ENCODE measurements at regions of chr10 and their contacts with region 1.

Region 1: DNA sequence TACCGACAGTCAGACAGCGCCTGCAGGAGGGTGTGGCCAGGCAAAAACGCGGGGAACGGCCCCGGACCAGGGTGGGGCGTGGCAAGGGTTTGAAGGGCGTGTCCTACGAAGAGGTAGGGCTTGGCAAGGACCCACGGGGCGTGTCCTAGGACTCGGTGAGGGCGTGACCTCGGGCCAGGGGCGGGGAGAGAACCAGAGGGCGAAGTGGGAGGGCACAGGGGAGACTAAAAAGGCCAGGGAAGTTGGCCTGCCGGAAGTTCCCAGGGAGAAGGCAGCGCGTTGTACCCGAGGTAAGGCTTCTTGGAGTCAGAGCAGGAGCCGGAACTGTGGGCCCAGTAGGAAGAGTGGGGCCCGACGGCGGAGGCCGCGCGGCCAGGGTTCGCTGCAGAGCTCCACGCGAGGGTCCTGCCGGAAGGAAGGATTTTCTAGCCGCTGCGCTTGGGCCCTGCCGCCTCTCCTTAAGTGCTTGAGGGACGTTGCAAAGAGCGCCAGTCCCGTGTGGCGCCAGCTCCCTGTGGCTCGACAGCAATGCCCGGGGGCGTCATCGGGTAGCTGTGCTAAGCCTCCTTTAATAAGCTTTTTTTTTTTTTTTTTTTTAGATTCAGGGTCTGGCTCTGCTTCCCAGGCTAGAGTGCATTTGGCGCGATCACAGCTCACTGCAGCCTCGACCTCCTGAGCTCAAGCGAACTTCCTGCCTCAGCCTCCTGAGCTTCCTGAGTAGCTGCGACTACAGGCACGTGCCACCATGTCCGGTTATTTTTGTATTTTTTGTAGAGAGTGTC is at the start of gene PTER:
- DNase-seq: peak; percentile 96 to 99 (median 98)
- ATAC-seq: peak; percentile 100
- H3K4me3 ChIP-seq: peak within 1 kb of the TSS; percentile 39 to 82 (median 68)
- H3K27ac ChIP-seq: peak within 1 kb of the TSS; percentile 37 to 93 (median 86)
- H3K4me1 ChIP-seq: peaks cover 0 to 51% (median 19%) of the 10 kb centered on the region in 12 donors
- H3K27me3 ChIP-seq: no peaks in the 10 kb centered on the region
- CTCF ChIP-seq: no peak
- POLR2A ChIP-seq: peak; percentile 50 to 89
- total RNA-seq, gene PTER: 7.4 to 19.3 (median 13.0) TPM

Region 2: DNA sequence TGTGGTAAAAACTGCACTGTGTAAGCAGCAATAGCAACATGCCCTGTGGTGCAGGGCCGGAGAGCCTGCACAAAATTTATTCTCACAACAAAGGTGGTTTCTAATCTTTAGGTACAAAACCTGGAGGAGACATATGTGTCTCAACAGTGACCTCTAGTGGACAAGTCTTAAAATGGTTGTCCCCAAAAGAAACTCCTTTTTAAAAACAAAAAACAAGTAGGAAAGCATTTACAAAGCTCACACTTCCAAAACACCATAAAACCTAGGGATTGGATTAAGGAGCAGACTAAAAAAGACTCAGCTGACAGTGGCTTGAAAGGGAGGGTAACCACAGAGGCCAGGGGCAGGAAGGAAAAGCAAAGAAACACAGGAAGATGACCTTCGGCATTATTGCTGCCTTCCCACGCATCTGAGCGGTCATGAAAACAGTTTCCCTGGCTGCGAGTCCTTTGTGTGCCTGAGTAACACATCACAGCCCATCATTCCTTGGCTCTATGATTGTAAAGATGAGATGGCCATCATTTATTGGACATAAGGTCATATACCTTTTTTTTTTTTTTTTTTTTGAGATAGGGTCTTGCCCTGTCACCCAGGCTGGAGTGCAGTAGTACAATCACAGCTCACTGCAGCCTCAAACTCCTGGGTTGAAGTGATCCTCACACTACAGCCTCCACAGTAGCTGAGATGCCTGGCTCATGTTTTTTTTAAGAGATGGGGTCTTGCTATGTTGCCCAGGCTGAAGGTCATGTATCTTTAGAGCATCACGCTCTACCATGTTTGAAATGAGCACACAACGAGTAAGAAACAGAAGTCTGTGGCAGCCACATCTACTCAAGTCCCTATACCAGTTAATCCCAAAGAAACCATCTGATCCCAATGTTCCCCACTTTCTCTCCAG is 340.8 kb after region 1 on chr10:
- intact Hi-C with region 1: loop called in 1 of 10 experiments (anchors 10 kb)
- DNase-seq: peak in 3 of 5 donors; percentile 46 to 61 (median 53)
- ATAC-seq: peak; percentile 69 to 96 (median 79)
- H3K4me3 ChIP-seq: peak overlapping the region in 1 of 12 donors; percentile 12
- H3K27ac ChIP-seq: peak overlapping the region in 10 of 12 donors; percentile 5 to 57 (median 34)
- H3K4me1 ChIP-seq: peaks cover 0 to 31% (median 11%) of the 10 kb centered on the region in 12 donors
- H3K27me3 ChIP-seq: no peaks in the 10 kb centered on the region
- CTCF ChIP-seq: peak; percentile 70 to 85 (median 81)
- POLR2A ChIP-seq: no peak

Region 3: DNA sequence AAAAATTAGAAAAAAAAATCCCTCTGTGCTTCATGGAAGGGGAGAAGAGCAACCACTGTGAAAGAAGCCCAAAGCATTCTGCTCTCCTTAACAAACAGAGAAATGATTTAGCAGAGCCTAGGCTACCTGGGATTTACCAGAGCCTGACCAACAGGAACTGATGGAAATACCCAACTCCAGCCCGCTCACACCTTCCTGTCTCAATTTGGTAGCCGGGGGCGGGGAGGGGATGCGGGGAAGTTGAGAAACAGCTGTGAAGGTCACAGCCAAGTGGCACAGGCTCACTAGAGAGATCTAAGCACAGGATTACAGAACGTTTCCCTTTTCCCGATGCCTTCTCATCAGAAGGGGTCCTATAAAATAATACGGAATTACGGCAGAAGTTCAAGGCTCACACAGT is 362.7 kb after region 1 on chr10:
- intact Hi-C with region 1: loop called in 1 of 10 experiments (anchors 10 kb)
- DNase-seq: no peak
- ATAC-seq: peak; percentile 33 to 55 (median 44)
- H3K4me3 ChIP-seq: no peak overlapping the region
- H3K27ac ChIP-seq: no peak overlapping the region
- H3K4me1 ChIP-seq: peaks cover 7 to 36% (median 19%) of the 10 kb centered on the region in 12 donors
- H3K27me3 ChIP-seq: no peaks in the 10 kb centered on the region
- CTCF ChIP-seq: no peak
- POLR2A ChIP-seq: no peak

Measured in heart left ventricle (tissue), 16 donors.